H1 (cell line): ENCODE measurements at regions of chr3 and their contacts with region 1.

Region 1: GRCh38 chr3:134978658-134979057 is 183.6 kb downstream of the EPHB1 start:
- DNase-seq: no peak
- H3K4me3 ChIP-seq: no peak overlapping the region
- H3K27ac ChIP-seq: no peak overlapping the region
- H3K4me1 ChIP-seq: no peaks in the 10 kb centered on the region
- H3K27me3 ChIP-seq: no peaks in the 10 kb centered on the region
- CTCF ChIP-seq: peak in 2 of 3 experiments; percentile 12 to 27; a peak in 2 of 4 replicates
- EP300 ChIP-seq: no peak
- POLR2A ChIP-seq: no peak
- RAD21 ChIP-seq: peak; percentile 3 to 25; a peak in 1 of 4 replicates

Region 2: GRCh38 chr3:134939978-134940377 is 38.7 kb before region 1 on chr3:
- CTCF ChIA-PET with region 1: interaction called, 11 read pairs
- POLR2A ChIA-PET with region 1: no interaction called
- DNase-seq: no peak
- H3K4me3 ChIP-seq: no peak overlapping the region
- H3K27ac ChIP-seq: no peak overlapping the region
- H3K4me1 ChIP-seq: peaks cover 11 to 19% (median 18%) of the 10 kb centered on the region in 4 experiments
- H3K27me3 ChIP-seq: peaks cover 0 to 7% (median 4%) of the 10 kb centered on the region in 4 experiments; a peak in 3 of 7 replicates
- CTCF ChIP-seq: no peak
- EP300 ChIP-seq: no peak
- POLR2A ChIP-seq: no peak
- RAD21 ChIP-seq: no peak

Region 3: DNA sequence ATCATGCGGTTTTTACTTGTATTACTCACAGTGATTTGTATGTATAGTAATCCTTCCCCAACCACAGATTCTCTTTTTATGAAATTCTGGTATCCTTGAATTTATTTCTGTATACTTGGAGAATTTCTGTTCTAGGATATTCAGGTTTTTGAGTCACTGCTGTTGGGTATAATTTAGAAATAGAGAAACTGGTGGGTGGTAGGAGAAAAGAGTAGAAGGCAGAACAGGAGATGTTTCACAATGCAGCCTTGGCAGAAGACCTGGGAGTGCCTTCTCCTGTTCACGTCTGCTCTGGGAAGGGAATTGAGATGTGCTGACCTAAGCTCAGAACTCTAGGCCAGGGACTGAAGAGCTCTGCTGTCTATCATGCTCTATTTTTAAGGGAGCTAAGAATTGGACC is 10.0 kb after region 1 on chr3:
- CTCF ChIA-PET with region 1: interaction called, 14 read pairs
- POLR2A ChIA-PET with region 1: no interaction called
- DNase-seq: no peak
- H3K4me3 ChIP-seq: no peak overlapping the region
- H3K27ac ChIP-seq: no peak overlapping the region
- H3K4me1 ChIP-seq: peaks cover 2 to 15% (median 13%) of the 10 kb centered on the region in 4 experiments
- H3K27me3 ChIP-seq: no peaks in the 10 kb centered on the region
- CTCF ChIP-seq: no peak
- EP300 ChIP-seq: no peak
- POLR2A ChIP-seq: no peak
- RAD21 ChIP-seq: no peak